ENCODE measurements at regions of chr11 and their contacts with region 1.

Region 1: DNA sequence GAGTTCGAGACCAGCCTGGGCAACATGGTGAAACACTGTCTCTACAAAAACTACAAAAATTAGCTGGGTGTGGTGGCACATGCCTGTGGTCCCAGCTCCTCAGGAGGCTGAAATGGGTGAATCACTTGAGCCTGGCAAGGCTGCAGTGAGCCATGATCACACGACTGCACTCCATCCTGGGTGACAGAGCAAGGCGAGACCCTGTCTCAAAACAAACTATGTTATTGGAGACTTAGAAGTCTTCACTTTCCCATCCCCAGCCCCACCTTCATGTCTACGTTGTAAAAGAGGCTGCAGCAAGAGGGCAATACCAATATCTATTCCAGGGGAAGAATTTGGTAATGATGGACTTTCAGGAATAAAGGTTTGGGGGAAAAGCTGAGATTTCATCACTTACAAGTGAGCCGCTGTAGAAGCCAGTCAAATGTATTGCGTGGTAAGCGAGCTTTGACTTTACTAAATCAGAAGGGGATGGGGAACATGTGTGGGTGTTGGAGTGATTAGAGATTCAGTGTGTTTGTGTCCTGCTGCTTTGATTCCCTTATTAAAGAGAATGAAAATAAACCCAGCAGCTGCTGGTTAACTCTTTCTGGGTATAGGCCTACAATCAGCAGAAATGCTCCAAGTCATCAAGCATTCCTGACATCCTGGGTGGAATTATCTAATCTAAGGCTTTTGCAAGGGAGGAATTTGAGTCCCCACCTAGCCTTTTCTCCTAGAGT is 53.7 kb downstream of the UBASH3B start:
- DNase-seq: peak; percentile 60
- H3K4me3 Mint-ChIP-seq: no peak overlapping the region
- H3K27ac Mint-ChIP-seq: peak overlapping the region; percentile 75
- H3K4me1 Mint-ChIP-seq: peaks cover 28% of the 10 kb centered on the region
- H3K27me3 Mint-ChIP-seq: no peaks in the 10 kb centered on the region
- CTCF ChIP-seq: no peak

Region 2: GRCh38 chr11:122601141-122602125 is 107.8 kb before region 1 on chr11:
- CTCF ChIA-PET with region 1: no interaction called
- POLR2A ChIA-PET with region 1: no interaction called
- intact Hi-C with region 1: no loop called
- DNase-seq: peak; percentile 45
- H3K4me3 Mint-ChIP-seq: no peak overlapping the region
- H3K27ac Mint-ChIP-seq: no peak overlapping the region
- H3K4me1 Mint-ChIP-seq: peaks cover 5% of the 10 kb centered on the region
- H3K27me3 Mint-ChIP-seq: no peaks in the 10 kb centered on the region
- CTCF ChIP-seq: no peak

Region 3: DNA sequence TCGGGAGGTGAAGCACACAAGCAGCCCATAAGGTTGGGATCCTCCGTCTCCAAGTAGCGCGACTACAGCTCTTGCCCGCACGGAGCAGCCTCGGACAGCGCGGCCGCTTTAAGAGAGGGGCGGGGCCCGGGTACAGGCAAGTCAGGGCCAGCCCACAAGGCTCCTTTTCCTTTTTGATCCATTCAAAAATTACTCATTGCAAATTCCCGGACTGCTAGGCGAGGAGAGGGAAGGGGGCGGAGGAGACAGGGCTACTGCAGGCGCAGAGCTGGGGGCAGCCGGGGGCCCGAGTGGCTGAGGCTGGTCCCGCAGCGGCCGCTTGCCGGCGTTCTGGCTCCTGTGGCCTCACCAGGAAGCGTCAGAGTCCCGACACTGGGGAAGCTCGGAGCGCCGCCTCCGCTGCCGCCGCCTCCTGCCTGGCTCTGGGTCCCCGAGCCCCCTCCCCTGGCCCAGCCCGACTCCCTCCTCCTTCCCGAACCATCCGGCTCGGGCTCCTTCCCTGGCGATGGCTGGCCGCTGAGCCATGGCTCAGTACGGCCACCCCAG is 53.6 kb before region 1 on chr11 and contains the start of gene UBASH3B:
- CTCF ChIA-PET with region 1: no interaction called
- POLR2A ChIA-PET with region 1: interaction called, 3 read pairs
- intact Hi-C with region 1: loop called (anchors 1 kb)
- DNase-seq: peak; percentile 90
- H3K4me3 Mint-ChIP-seq: peak within 1 kb of the TSS; percentile 77
- H3K27ac Mint-ChIP-seq: peak within 1 kb of the TSS; percentile 64
- H3K4me1 Mint-ChIP-seq: peaks cover 5% of the 10 kb centered on the region
- H3K27me3 Mint-ChIP-seq: no peaks in the 10 kb centered on the region
- CTCF ChIP-seq: no peak
- total RNA-seq, gene UBASH3B: 6.2 and 10.3 TPM in 2 replicates

Measured in MCF 10A (cell line).